Activated CD4-positive, alpha-beta T cell treated with anti-CD3 and anti-CD28 coated beads for 36 hours (primary cell): ENCODE measurements at regions of chr10 and their contacts with region 1.

Region 1: DNA sequence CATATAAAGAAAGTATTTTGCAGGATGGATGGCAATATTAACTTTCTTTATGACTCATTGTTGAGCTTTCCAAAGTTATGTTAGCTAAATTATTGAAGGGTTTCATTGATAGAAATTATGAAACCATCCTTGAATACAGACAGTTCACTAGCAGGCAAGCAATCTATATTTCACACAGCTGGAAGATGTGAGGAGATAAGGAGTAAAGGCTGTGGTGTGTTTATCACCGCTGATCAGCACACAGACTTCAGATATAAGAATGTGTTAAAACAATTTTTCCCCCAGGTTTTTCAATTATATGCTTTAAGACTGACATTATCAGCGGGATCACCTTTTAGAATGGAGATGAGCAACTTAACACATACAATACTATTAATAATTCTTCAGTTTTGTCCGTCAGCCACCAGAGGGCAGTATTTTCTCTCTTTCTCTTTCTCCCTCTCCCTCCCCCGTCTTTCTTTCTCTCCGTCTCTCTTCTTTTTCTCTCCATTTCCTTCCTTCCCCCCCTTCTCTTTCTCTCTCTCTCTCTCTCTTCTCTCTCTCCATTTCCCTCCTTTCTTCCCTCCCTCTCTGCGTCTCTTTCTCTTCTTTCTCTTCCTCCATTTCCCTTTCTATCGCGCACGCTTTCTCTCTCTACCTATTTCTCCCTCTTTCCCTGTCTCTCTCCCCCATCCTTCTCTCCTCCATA is 62.9 kb upstream of the FAM171A1 start:
- DNase-seq: peak; percentile 45
- ATAC-seq: peak; percentile 60
- H3K4me3 Mint-ChIP-seq: peak overlapping the region; percentile 64
- H3K27ac Mint-ChIP-seq: no peak overlapping the region
- H3K4me1 Mint-ChIP-seq: peaks cover 4% of the 10 kb centered on the region
- H3K27me3 Mint-ChIP-seq: peaks cover 16% of the 10 kb centered on the region

Region 2: GRCh38 chr10:14727465-14727864 is 706.5 kb before region 1 on chr10:
- CTCF ChIA-PET with region 1: no interaction called
- POLR2A ChIA-PET with region 1: no interaction called
- intact Hi-C with region 1: no loop called
- DNase-seq: no peak
- ATAC-seq: no peak
- H3K4me3 Mint-ChIP-seq: no peak overlapping the region
- H3K27ac Mint-ChIP-seq: no peak overlapping the region
- H3K4me1 Mint-ChIP-seq: peaks cover 31% of the 10 kb centered on the region
- H3K27me3 Mint-ChIP-seq: no peaks in the 10 kb centered on the region

Region 3: GRCh38 chr10:14982744-14983143 is 451.2 kb before region 1 on chr10:
- CTCF ChIA-PET with region 1: no interaction called
- POLR2A ChIA-PET with region 1: no interaction called
- intact Hi-C with region 1: no loop called
- DNase-seq: no peak
- ATAC-seq: no peak
- H3K4me3 Mint-ChIP-seq: no peak overlapping the region
- H3K27ac Mint-ChIP-seq: no peak overlapping the region
- H3K4me1 Mint-ChIP-seq: no peaks in the 10 kb centered on the region
- H3K27me3 Mint-ChIP-seq: no peaks in the 10 kb centered on the region

Region 4: GRCh38 chr10:15725603-15726002 is 291.6 kb after region 1 on chr10:
- CTCF ChIA-PET with region 1: no interaction called
- POLR2A ChIA-PET with region 1: no interaction called
- intact Hi-C with region 1: loop called in 1 of 2 experiments (anchors 1 kb)
- DNase-seq: no peak
- ATAC-seq: no peak
- H3K4me3 Mint-ChIP-seq: no peak overlapping the region
- H3K27ac Mint-ChIP-seq: no peak overlapping the region
- H3K4me1 Mint-ChIP-seq: no peaks in the 10 kb centered on the region
- H3K27me3 Mint-ChIP-seq: peaks cover 16% of the 10 kb centered on the region

Region 5: GRCh38 chr10:15744217-15744865 is 310.3 kb after region 1 on chr10:
- CTCF ChIA-PET with region 1: interaction called, 4 read pairs
- POLR2A ChIA-PET with region 1: no interaction called
- intact Hi-C with region 1: loop called (anchors 2 to 10 kb)
- DNase-seq: peak; percentile 67
- ATAC-seq: no peak
- H3K4me3 Mint-ChIP-seq: no peak overlapping the region
- H3K27ac Mint-ChIP-seq: no peak overlapping the region
- H3K4me1 Mint-ChIP-seq: no peaks in the 10 kb centered on the region
- H3K27me3 Mint-ChIP-seq: peaks cover 4% of the 10 kb centered on the region

Region 6: GRCh38 chr10:15824498-15824897 is 390.5 kb after region 1 on chr10:
- CTCF ChIA-PET with region 1: interaction called, 3 read pairs
- POLR2A ChIA-PET with region 1: no interaction called
- intact Hi-C with region 1: loop called (anchors 5 kb)
- DNase-seq: no peak
- ATAC-seq: no peak
- H3K4me3 Mint-ChIP-seq: no peak overlapping the region
- H3K27ac Mint-ChIP-seq: no peak overlapping the region
- H3K4me1 Mint-ChIP-seq: no peaks in the 10 kb centered on the region
- H3K27me3 Mint-ChIP-seq: no peaks in the 10 kb centered on the region